HAP-1 (cell line): ENCODE measurements at regions of chr13 and their contacts with region 1.

Region 1: DNA sequence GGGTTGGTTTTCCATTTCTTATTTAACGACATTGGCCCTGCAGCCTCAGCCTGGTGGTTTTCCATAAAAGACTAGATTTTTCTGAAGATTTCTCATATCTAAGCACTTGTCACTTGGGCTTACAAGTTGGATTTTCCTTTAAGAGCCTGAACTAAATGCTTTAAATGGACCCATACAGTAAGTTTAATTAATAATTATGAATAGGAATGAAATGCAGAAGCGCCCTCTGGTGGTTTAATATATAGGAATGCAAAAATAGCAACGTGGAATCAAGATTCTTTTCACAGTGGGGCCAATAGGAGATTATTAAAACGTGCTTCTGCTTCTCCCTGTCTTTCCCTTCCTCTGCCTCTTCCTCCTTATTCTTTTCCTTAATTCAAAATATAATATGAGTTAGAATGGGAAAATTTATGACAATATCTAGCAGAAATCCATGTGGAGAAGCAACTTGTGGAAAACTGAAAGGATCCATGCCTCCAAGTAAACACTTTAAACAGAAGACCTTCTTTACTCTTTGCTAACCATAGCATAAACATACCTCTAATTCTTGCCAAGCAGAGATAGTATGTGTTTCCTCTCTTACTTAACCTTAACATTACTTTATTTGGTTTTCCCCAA is 324.0 kb downstream of the GPC5 start:
- DNase-seq: peak; percentile 15 to 37
- H3K4me3 ChIP-seq: no peak overlapping the region
- H3K4me1 ChIP-seq: no peaks in the 10 kb centered on the region
- H3K27me3 ChIP-seq: no peaks in the 10 kb centered on the region

Region 2: GRCh38 chr13:91398413-91399272 is 323.7 kb before region 1 on chr13 and contains the start of gene GPC5:
- in situ Hi-C with region 1: loop called (anchors 25 kb)
- DNase-seq: peak; percentile 76 to 84
- H3K4me3 ChIP-seq: peak within 1 kb of the TSS; percentile 38
- H3K4me1 ChIP-seq: no peaks in the 10 kb centered on the region
- H3K27me3 ChIP-seq: peaks cover 42% of the 10 kb centered on the region